H1 (cell line): ENCODE measurements at regions of chr2 and their contacts with region 1.

Region 1: GRCh38 chr2:177724398-177725287 is 332.1 kb downstream of the AGPS start:
- DNase-seq: peak; percentile 13 to 78
- H3K4me3 ChIP-seq: no peak overlapping the region
- H3K27ac ChIP-seq: no peak overlapping the region
- H3K4me1 ChIP-seq: no peaks in the 10 kb centered on the region; a peak in 1 of 7 replicates
- H3K27me3 ChIP-seq: peaks cover 9 to 28% (median 19%) of the 10 kb centered on the region in 4 experiments
- CTCF ChIP-seq: peak; percentile 54 to 94 (median 83)
- EP300 ChIP-seq: no peak
- POLR2A ChIP-seq: no peak
- RAD21 ChIP-seq: peak; percentile 96

Region 2: GRCh38 chr2:177489719-177490301 is 234.8 kb before region 1 on chr2:
- CTCF ChIA-PET with region 1: interaction called, 12 read pairs
- POLR2A ChIA-PET with region 1: no interaction called
- DNase-seq: no peak
- H3K4me3 ChIP-seq: no peak overlapping the region
- H3K27ac ChIP-seq: no peak overlapping the region
- H3K4me1 ChIP-seq: no peaks in the 10 kb centered on the region
- H3K27me3 ChIP-seq: no peaks in the 10 kb centered on the region
- CTCF ChIP-seq: peak in 2 of 3 experiments; percentile 29 to 38; a peak in 2 of 4 replicates
- EP300 ChIP-seq: no peak
- POLR2A ChIP-seq: no peak
- RAD21 ChIP-seq: peak; percentile 64 to 65

Region 3: GRCh38 chr2:177692828-177693269 is 31.8 kb before region 1 on chr2:
- CTCF ChIA-PET with region 1: interaction called, 10 read pairs
- POLR2A ChIA-PET with region 1: no interaction called
- DNase-seq: no peak
- H3K4me3 ChIP-seq: no peak overlapping the region
- H3K27ac ChIP-seq: no peak overlapping the region
- H3K4me1 ChIP-seq: peaks cover 0 to 7% (median 1%) of the 10 kb centered on the region in 4 experiments; a peak in 2 of 7 replicates
- H3K27me3 ChIP-seq: no peaks in the 10 kb centered on the region
- CTCF ChIP-seq: peak in 1 of 3 experiments; percentile 27; a peak in 1 of 4 replicates
- EP300 ChIP-seq: no peak
- POLR2A ChIP-seq: no peak
- RAD21 ChIP-seq: peak; percentile 11 to 28; a peak in 3 of 4 replicates

Region 4: GRCh38 chr2:177763532-177764265 is 39.1 kb after region 1 on chr2:
- CTCF ChIA-PET with region 1: interaction called, 18 read pairs
- POLR2A ChIA-PET with region 1: no interaction called
- DNase-seq: peak; percentile 31 to 93
- H3K4me3 ChIP-seq: peak overlapping the region; percentile 15 to 51 (median 27); a peak in 7 of 8 replicates
- H3K27ac ChIP-seq: no peak overlapping the region
- H3K4me1 ChIP-seq: peaks cover 0 to 6% (median under 1%) of the 10 kb centered on the region in 4 experiments; a peak in 5 of 7 replicates
- H3K27me3 ChIP-seq: peaks cover 0 to 2% (median 1%) of the 10 kb centered on the region in 4 experiments; a peak in 2 of 7 replicates
- CTCF ChIP-seq: peak; percentile 74 to 93 (median 78)
- EP300 ChIP-seq: no peak
- POLR2A ChIP-seq: no peak
- RAD21 ChIP-seq: peak; percentile 43 to 65

Region 5: GRCh38 chr2:177868806-177869205 is 144.2 kb after region 1 on chr2:
- CTCF ChIA-PET with region 1: no interaction called
- POLR2A ChIA-PET with region 1: no interaction called
- DNase-seq: no peak
- H3K4me3 ChIP-seq: no peak overlapping the region
- H3K27ac ChIP-seq: no peak overlapping the region
- H3K4me1 ChIP-seq: no peaks in the 10 kb centered on the region
- H3K27me3 ChIP-seq: no peaks in the 10 kb centered on the region
- CTCF ChIP-seq: no peak
- EP300 ChIP-seq: no peak
- POLR2A ChIP-seq: no peak
- RAD21 ChIP-seq: no peak